Calu3 (cell line): ENCODE measurements at regions of chr20 and their contacts with region 1.

Region 1: DNA sequence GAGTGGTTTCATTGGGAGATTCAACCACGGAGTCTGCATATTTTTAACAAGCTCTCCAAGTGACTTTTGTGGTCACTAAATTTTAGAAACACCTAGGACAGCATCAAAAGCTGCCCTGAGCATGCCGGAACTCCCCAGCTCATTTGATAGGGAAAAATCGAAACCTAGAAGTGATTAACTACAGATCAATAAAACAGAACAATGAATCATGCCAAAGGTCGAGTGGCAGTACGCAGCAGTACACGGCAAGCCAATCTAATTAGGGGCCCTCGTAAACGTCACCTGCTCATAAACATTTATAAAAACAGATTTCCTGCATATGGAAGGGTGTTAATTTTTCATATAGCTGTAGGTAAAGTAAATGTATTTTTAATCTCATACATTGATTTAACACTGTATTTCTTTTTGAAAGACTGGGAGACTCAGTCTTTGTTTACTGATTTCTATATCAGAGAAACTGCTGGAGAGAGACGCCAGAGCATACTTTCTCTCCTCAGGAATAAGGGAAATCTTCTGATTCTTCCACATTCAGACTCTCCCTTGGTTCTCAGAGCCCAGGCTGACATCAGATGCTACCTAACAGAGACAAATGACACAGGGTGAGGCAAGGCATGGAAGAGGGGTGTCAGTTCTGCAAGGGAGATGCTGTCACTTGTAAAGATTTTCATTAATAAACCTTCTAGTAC is 232.5 kb downstream of the PTPRT start:
- DNase-seq: peak; percentile 52
- H3K4me3 Mint-ChIP-seq: peak overlapping the region; percentile 47
- H3K27ac Mint-ChIP-seq: peak overlapping the region; percentile 57
- H3K4me1 Mint-ChIP-seq: peaks cover 30% of the 10 kb centered on the region
- H3K27me3 Mint-ChIP-seq: no peaks in the 10 kb centered on the region
- CTCF ChIP-seq: no peak

Region 2: GRCh38 chr20:42873258-42873657 is 83.9 kb before region 1 on chr20:
- CTCF ChIA-PET with region 1: no interaction called
- intact Hi-C with region 1: no loop called
- DNase-seq: no peak
- H3K4me3 Mint-ChIP-seq: no peak overlapping the region
- H3K27ac Mint-ChIP-seq: no peak overlapping the region
- H3K4me1 Mint-ChIP-seq: no peaks in the 10 kb centered on the region
- H3K27me3 Mint-ChIP-seq: peaks cover 30% of the 10 kb centered on the region
- CTCF ChIP-seq: no peak

Region 3: GRCh38 chr20:42938441-42939205 is 18.5 kb before region 1 on chr20:
- CTCF ChIA-PET with region 1: no interaction called
- intact Hi-C with region 1: loop called (anchors 1 kb)
- DNase-seq: peak; percentile 71
- H3K4me3 Mint-ChIP-seq: no peak overlapping the region
- H3K27ac Mint-ChIP-seq: peak overlapping the region; percentile 23
- H3K4me1 Mint-ChIP-seq: peaks cover 24% of the 10 kb centered on the region
- H3K27me3 Mint-ChIP-seq: no peaks in the 10 kb centered on the region
- CTCF ChIP-seq: no peak